ENCODE measurements at regions of chr1 and their contacts with region 1.

Region 1: GRCh38 chr1:113042285-113043143 is 30.5 kb upstream of the LRIG2 start:
- DNase-seq: peak; percentile 79 to 91 (median 82)
- H3K4me3 ChIP-seq: no peak overlapping the region
- H3K27ac ChIP-seq: peak overlapping the region in 1 of 2 donors; percentile 23
- H3K4me1 ChIP-seq: peaks cover 3 to 10% (median 6%) of the 10 kb centered on the region in 3 donors
- H3K27me3 ChIP-seq: no peaks in the 10 kb centered on the region
- CTCF ChIP-seq: peak; percentile 69

Region 2: GRCh38 chr1:112674986-112675727 is 367.4 kb before region 1 on chr1:
- intact Hi-C with region 1: no loop called
- DNase-seq: peak; percentile 75 to 90 (median 84)
- H3K4me3 ChIP-seq: peak overlapping the region; percentile 83 to 98 (median 87)
- H3K27ac ChIP-seq: peak overlapping the region; percentile 91 to 96
- H3K4me1 ChIP-seq: peaks cover 9 to 16% (median 9%) of the 10 kb centered on the region in 3 donors
- H3K27me3 ChIP-seq: no peaks in the 10 kb centered on the region
- CTCF ChIP-seq: no peak

Region 3: GRCh38 chr1:112722601-112723510 is 319.7 kb before region 1 on chr1:
- intact Hi-C with region 1: loop called (anchors 10 kb)
- DNase-seq: peak; percentile 61 to 80 (median 67)
- H3K4me3 ChIP-seq: no peak overlapping the region
- H3K27ac ChIP-seq: no peak overlapping the region
- H3K4me1 ChIP-seq: peaks cover 0 to 3% (median 0%) of the 10 kb centered on the region in 3 donors
- H3K27me3 ChIP-seq: peaks cover 2% of the 10 kb centered on the region
- CTCF ChIP-seq: no peak

Region 4: DNA sequence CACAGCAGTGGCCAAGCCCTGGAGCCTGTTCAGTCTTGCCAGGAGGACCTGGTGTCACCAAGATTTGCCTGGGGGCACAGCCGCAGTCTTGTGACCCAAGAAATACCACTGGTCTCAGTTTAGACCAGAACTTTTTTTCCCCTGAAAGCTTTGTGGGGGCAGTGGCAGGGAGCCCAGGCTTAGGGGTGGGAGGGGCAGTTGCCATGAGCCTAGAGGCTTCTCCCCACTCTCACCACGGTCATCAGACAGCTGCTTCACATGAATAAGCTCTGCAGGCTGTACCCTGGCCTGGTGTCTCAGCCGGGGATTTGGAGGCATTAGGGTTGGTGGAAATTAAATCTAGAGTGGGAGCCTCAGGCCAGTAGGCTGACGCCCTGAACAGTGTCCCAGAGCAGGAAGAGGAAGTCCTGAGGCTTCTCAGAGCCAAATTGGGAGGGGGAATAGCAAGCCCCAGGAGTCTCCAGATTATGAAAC is 160.2 kb before region 1 on chr1:
- intact Hi-C with region 1: loop called (anchors 5 kb)
- DNase-seq: peak in 1 of 5 donors; percentile 7
- H3K4me3 ChIP-seq: no peak overlapping the region
- H3K27ac ChIP-seq: no peak overlapping the region
- H3K4me1 ChIP-seq: no peaks in the 10 kb centered on the region
- H3K27me3 ChIP-seq: no peaks in the 10 kb centered on the region
- CTCF ChIP-seq: no peak